PC-3 (cell line): ENCODE measurements at regions of chr2 and their contacts with region 1.

Region 1: DNA sequence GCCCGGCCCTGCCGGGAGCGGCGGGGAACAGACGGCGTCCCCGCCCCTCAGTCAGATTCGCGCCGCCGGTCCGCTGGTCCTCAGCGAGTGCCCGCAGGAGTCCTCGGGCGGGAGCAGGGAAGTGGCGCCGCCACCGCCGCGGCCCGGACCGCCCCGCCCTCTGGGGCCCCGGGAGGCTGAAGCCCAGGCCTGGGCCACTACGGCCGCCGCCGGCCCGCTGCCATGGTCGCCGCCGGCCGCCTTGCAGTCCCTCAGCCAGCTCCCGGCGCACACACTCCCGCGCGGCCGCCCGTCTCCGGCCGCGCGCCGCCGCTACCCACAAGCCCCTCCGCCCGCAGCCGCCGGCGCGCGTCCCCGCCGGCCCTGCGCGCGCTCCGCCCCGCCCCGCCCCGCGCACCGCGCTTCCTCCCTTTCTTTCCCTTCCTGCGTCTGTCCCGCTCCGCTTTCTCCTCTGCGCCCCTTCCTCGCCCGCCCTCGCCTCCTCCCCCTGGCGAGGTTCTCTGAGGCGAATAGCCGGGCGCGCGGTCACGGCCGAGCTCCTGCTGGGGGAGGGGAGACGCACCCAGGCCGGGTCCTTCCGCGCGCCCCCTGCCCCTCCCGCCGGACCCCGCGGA is at the start of gene ROCK2:
- DNase-seq: peak; percentile 80
- ATAC-seq: peak; percentile 53
- H3K4me3 ChIP-seq: peak within 1 kb of the TSS; percentile 95
- H3K27ac ChIP-seq: peak within 1 kb of the TSS; percentile 98
- H3K4me1 ChIP-seq: peaks cover 47% of the 10 kb centered on the region
- H3K27me3 ChIP-seq: no peaks in the 10 kb centered on the region
- CTCF ChIP-seq: no peak
- total RNA-seq, gene ROCK2: 35.3 and 40.7 TPM in 2 replicates

Region 2: GRCh38 chr2:10918661-10919409 is 425.6 kb before region 1 on chr2:
- CTCF ChIA-PET with region 1: no interaction called
- POLR2A ChIA-PET with region 1: no interaction called
- intact Hi-C with region 1: no loop called
- DNase-seq: no peak
- ATAC-seq: no peak
- H3K4me3 ChIP-seq: no peak overlapping the region
- H3K27ac ChIP-seq: no peak overlapping the region
- H3K4me1 ChIP-seq: no peaks in the 10 kb centered on the region
- H3K27me3 ChIP-seq: no peaks in the 10 kb centered on the region
- CTCF ChIP-seq: no peak

Region 3: DNA sequence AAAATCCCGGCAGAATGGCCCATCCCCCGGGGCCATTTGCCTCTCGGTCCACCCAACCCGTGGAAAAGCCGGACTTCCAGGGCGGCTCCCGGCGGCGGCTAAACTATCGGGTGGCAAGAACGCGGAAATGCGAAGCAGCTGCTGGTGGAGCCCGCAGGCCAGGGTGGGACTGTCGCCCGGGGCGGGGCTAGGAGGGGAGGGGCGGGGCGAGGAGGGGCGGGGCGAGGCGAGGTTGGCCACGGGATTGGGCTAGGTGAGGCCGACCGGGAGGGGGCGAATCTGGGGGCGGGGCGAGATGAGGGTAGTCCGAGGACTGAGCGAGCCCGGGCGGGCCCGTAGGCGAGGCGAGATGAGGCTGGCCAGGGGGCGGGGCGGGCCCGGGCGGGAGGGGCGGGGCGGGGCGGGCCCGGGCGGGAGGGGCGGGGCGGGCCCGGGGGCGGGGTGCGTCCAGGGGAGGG is 189.5 kb before region 1 on chr2:
- CTCF ChIA-PET with region 1: no interaction called
- POLR2A ChIA-PET with region 1: no interaction called
- intact Hi-C with region 1: loop called (anchors 10 kb)
- DNase-seq: peak; percentile 91
- ATAC-seq: peak; percentile 84
- H3K4me3 ChIP-seq: peak overlapping the region; percentile 68
- H3K27ac ChIP-seq: peak overlapping the region; percentile 83
- H3K4me1 ChIP-seq: peaks cover 12% of the 10 kb centered on the region
- H3K27me3 ChIP-seq: no peaks in the 10 kb centered on the region
- CTCF ChIP-seq: no peak

Region 4: DNA sequence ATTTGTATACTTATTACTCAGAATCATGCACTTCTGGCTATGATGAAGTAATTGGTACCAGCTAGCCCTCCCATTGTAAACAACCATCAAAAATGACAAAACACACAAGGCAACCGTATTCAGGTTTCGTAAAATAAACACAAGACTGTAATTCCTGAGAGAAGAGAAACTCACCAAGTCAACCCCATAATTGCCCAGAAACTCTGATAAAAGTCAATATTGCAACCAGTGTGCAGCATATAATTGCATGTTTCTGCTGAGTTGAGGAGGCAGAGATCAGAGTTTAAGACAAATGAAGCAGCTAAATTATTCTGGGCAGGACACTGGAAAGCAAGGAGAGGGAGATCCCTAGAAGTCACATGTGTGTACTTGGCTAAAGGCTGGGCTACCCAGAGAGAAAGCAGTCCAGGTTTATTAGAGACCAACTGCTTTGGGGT is 90.3 kb before region 1 on chr2:
- CTCF ChIA-PET with region 1: no interaction called
- POLR2A ChIA-PET with region 1: no interaction called
- intact Hi-C with region 1: loop called (anchors 2 kb)
- DNase-seq: peak; percentile 56
- ATAC-seq: peak; percentile 86
- H3K4me3 ChIP-seq: no peak overlapping the region
- H3K27ac ChIP-seq: peak overlapping the region; percentile 69
- H3K4me1 ChIP-seq: peaks cover 6% of the 10 kb centered on the region
- H3K27me3 ChIP-seq: no peaks in the 10 kb centered on the region
- CTCF ChIP-seq: no peak

Region 5: GRCh38 chr2:11286749-11287148 is 57.7 kb before region 1 on chr2:
- CTCF ChIA-PET with region 1: no interaction called
- POLR2A ChIA-PET with region 1: no interaction called
- intact Hi-C with region 1: no loop called
- DNase-seq: no peak
- ATAC-seq: no peak
- H3K4me3 ChIP-seq: no peak overlapping the region
- H3K27ac ChIP-seq: no peak overlapping the region
- H3K4me1 ChIP-seq: no peaks in the 10 kb centered on the region
- H3K27me3 ChIP-seq: no peaks in the 10 kb centered on the region
- CTCF ChIP-seq: no peak

Region 6: DNA sequence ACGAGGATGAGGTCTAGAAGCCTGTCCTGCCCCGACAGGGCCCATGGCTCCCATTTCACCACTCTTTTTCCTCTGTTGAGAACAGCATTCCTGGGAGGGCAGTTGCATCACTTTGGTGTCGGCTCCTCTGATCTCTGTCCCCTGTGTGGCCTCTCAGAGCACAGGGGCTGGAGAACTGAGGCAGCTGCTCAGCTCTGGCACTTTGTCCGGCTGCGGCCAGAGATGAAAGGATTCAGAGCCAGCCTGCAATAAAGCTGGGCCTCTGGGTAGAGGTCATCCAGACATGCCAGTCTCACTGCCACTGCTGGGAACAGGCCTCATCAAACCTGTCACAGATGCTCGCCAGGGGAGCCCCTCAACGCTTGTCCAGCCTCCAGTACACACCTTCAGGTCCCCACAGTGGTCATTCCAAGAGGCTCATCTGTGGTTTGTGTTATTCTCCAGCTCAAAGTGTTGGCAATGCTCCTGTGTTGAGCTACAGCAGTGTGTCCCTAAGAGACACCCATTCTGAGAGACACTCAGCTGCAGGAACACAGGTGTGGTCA is 13.1 kb after region 1 on chr2:
- CTCF ChIA-PET with region 1: no interaction called
- POLR2A ChIA-PET with region 1: interaction called, 5 read pairs
- intact Hi-C with region 1: loop called (anchors 1 kb)
- DNase-seq: no peak
- ATAC-seq: no peak
- H3K4me3 ChIP-seq: no peak overlapping the region
- H3K27ac ChIP-seq: no peak overlapping the region
- H3K4me1 ChIP-seq: no peaks in the 10 kb centered on the region
- H3K27me3 ChIP-seq: no peaks in the 10 kb centered on the region
- CTCF ChIP-seq: no peak

Region 7: DNA sequence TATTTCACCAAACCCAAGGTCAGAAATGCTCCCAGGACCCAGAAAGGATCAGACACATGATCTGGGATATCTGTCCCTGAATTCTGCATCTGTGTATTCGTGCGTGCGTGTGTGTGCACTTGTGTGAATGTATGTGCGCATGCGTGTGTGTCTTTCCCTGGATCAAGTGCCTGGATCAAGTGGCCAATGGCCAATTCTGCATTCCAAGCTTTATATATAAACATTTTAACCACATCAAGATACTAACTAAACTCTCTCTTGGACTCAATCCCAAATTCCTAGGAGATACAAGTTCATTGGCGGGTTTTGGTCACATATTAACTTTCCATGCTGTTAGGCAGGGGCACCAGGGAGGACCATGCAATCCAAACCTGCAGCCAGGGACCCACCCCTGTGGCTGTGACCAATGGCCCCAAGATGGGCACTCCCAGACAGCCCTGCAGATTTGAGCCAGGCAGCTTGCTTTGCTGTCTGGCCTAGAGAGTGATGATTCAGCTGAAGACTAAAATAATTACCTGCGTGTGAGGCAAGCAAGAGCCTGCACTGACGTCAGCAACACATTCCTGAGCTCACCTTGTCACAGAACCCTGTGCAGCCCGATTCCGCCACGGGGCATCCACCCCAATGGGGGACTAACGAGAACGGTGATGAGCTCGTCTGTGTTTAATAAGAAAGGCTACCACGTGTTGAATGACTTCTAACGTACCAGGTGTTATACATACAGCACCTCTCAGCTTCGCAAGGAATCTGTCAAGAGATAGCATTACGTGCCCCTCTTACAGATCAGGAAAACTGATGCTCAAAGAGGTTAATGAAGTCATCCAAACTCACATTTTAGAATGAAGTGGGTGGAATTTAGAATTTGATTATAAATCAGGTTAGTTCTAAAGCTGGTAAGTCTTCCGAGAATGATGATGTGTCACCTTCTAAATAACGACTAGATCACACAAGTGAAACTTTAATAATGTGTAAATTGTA is 45.4 kb after region 1 on chr2:
- CTCF ChIA-PET with region 1: no interaction called
- POLR2A ChIA-PET with region 1: interaction called, 12 read pairs
- intact Hi-C with region 1: loop called (anchors 1 kb)
- DNase-seq: peak; percentile 77
- ATAC-seq: peak; percentile 29
- H3K4me3 ChIP-seq: no peak overlapping the region
- H3K27ac ChIP-seq: peak overlapping the region; percentile 61
- H3K4me1 ChIP-seq: peaks cover 49% of the 10 kb centered on the region
- H3K27me3 ChIP-seq: no peaks in the 10 kb centered on the region
- CTCF ChIP-seq: no peak

Region 8: DNA sequence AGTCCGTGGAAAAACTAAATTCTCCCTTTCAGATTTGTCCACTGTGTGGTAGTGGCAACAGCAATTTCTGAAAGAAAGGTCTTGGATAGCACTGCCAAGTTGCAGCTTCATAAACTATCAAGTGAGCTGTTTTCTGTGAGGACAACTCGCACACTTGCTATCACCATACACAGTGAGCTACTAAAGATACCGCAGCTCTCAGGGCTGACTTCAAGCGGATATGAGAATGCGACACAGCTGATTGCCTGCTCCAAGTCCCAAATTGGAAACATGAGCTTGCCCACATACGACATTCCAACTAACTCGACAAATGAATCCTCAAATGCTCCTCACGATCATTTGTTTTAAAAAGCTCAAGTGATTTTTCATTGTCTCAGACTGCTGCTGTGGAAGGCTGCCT is 75.3 kb after region 1 on chr2:
- CTCF ChIA-PET with region 1: no interaction called
- POLR2A ChIA-PET with region 1: no interaction called
- intact Hi-C with region 1: no loop called
- DNase-seq: no peak
- ATAC-seq: no peak
- H3K4me3 ChIP-seq: no peak overlapping the region
- H3K27ac ChIP-seq: no peak overlapping the region
- H3K4me1 ChIP-seq: no peaks in the 10 kb centered on the region
- H3K27me3 ChIP-seq: no peaks in the 10 kb centered on the region
- CTCF ChIP-seq: no peak